ENCODE measurements at regions of chr5 and their contacts with region 1.

Region 1: GRCh38 chr5:103475629-103476240 is 86.9 kb downstream of the NUDT12 start:
- DNase-seq: no peak
- ATAC-seq: no peak
- H3K4me3 Mint-ChIP-seq: no peak overlapping the region
- H3K27ac Mint-ChIP-seq: no peak overlapping the region
- H3K4me1 Mint-ChIP-seq: no peaks in the 10 kb centered on the region
- H3K27me3 Mint-ChIP-seq: peaks cover 41% of the 10 kb centered on the region

Region 2: GRCh38 chr5:103232393-103232999 is 243.2 kb before region 1 on chr5:
- CTCF ChIA-PET with region 1: interaction called, 28 read pairs
- DNase-seq: no peak
- ATAC-seq: peak; percentile 73
- H3K4me3 Mint-ChIP-seq: no peak overlapping the region
- H3K27ac Mint-ChIP-seq: no peak overlapping the region
- H3K4me1 Mint-ChIP-seq: peaks cover 7% of the 10 kb centered on the region
- H3K27me3 Mint-ChIP-seq: peaks cover 28% of the 10 kb centered on the region

Region 3: DNA sequence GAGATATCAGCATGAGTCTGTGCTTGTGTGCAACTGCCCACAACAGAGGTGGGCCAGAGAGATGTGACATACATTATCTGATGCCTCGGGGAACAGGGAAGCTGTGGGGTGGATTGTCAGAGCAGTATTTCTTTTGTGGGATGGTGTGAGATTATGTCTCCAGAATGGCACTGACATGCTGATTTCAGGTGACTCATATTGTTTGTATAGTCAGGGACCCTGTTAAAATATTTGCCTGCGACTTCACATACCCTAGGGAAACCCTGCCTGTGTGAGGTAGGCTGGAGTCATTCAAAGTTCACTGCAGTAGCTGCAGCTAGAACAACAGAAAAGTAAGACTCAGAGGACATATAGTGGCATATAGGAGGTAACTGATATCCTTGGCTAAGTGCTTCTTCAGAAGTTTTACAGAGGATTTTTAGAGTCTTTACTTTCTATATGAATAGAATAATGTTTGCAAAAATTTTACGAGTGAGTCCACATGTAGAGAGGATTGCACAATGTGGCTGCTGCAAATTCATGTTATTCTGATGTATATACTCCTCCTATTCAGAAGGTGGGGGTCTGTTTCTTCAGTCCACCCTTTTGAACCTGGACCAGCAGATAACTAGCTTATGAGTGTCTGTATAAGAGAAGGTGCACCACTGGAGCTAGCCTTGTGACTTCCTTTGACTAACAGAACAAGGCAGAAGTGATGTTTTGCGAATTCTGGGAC is 127.9 kb before region 1 on chr5:
- CTCF ChIA-PET with region 1: no interaction called
- DNase-seq: no peak
- ATAC-seq: no peak
- H3K4me3 Mint-ChIP-seq: no peak overlapping the region
- H3K27ac Mint-ChIP-seq: no peak overlapping the region
- H3K4me1 Mint-ChIP-seq: peaks cover 2% of the 10 kb centered on the region
- H3K27me3 Mint-ChIP-seq: peaks cover 39% of the 10 kb centered on the region

Region 4: DNA sequence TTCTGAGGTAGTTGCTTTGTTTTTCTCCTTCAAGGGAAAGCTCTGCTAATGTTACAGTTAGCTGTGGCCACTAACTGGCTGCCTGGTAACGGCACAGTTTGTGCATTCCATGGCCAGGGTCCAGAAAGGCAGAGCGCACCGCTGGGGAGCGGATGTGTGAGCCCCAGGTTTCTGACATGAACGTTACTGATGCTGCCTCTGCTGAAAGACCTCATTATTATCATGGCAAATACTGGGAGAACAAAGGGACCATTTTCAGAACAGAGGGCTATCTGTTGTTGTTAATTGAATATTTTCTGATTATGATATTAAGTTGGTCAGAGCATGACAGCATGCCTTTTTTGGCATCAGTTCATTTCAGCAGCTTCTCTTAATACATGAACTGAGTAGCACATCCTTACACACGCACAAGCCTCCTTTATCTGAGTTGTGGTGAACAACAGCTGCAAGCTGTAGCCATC is 47.3 kb before region 1 on chr5:
- CTCF ChIA-PET with region 1: no interaction called
- DNase-seq: no peak
- ATAC-seq: no peak
- H3K4me3 Mint-ChIP-seq: no peak overlapping the region
- H3K27ac Mint-ChIP-seq: no peak overlapping the region
- H3K4me1 Mint-ChIP-seq: no peaks in the 10 kb centered on the region
- H3K27me3 Mint-ChIP-seq: peaks cover 13% of the 10 kb centered on the region